Caco-2 (cell line): ENCODE measurements at regions of chr15 and their contacts with region 1.

Region 1: GRCh38 chr15:68875377-68876116 is 54.8 kb upstream of the SPESP1 start:
- DNase-seq: peak; percentile 88 to 90
- H3K4me3 ChIP-seq: peak overlapping the region; percentile 41
- H3K4me3 Mint-ChIP-seq: peak overlapping the region; percentile 76
- H3K27ac Mint-ChIP-seq: no peak overlapping the region
- H3K4me1 ChIP-seq: no peaks in the 10 kb centered on the region
- H3K4me1 Mint-ChIP-seq: no peaks in the 10 kb centered on the region
- H3K27me3 ChIP-seq: no peaks in the 10 kb centered on the region
- H3K27me3 Mint-ChIP-seq: peaks cover 5% of the 10 kb centered on the region
- CTCF ChIP-seq: peak; percentile 86

Region 2: DNA sequence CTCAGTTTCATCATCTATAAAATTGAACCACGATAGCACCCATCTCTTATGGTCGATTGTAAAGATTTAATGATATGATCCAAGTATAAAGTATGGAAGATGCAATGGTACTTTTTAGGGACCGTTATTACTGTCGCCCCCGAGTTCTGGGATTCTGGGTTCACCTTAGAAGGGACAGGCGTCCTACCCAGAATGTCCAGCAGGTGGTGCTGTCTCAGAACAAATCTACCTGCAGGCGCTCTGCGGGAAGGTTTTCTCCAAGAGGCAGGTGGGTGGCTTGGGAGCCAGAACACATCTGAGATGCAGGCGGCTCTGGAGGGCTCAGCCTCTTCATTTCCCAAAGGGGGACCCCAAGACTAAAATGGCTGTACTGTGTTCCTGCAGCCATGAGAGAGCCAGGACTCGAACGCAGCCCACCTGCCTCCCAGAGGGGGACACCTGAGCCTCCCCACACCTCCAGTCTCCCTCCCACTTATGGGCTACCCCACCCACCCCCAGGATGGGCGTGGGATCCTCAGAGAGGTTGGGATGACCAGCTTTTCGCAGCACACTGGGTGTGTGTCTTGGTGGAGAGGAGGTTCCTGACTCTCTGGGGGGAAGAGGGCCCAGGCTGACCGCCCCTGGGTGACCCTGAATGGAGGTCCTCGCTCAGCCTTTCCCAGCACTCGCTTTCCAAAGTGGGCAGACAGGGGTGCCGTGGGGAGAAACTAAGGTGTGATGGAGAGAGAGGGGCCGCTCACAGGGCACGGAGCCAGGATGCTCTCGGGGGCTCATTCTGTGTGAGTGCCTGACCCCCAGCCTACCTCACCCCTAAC is 324.9 kb before region 1 on chr15:
- CTCF ChIA-PET with region 1: interaction called, 3 read pairs
- POLR2A ChIA-PET with region 1: no interaction called
- intact Hi-C with region 1: loop called (anchors 2 kb)
- DNase-seq: peak; percentile 70 to 80
- H3K4me3 ChIP-seq: no peak overlapping the region
- H3K4me3 Mint-ChIP-seq: no peak overlapping the region
- H3K27ac Mint-ChIP-seq: no peak overlapping the region
- H3K4me1 ChIP-seq: no peaks in the 10 kb centered on the region
- H3K4me1 Mint-ChIP-seq: no peaks in the 10 kb centered on the region
- H3K27me3 ChIP-seq: no peaks in the 10 kb centered on the region
- H3K27me3 Mint-ChIP-seq: peaks cover 19% of the 10 kb centered on the region
- CTCF ChIP-seq: peak; percentile 84 to 89

Region 3: DNA sequence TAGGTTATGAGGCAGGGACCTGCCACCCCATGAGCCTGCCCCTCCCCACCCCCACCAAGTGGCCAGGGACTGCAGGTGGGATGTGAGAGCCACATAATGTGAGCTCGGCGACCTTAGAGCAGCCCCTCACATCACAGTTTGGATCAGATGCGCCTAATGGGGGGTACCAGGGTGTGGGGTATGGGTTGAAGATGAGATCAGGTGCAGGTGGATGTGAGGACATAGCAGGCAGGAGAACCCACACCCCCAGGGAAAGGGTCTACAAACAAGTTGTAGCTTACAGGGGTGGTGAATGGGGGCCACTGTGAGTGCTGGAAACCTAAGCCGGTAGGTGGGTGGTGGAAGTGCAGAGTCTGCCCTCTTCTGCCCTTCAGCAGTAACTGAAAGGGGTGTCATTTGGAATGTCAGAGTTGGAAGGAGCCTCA is 202.8 kb before region 1 on chr15:
- CTCF ChIA-PET with region 1: interaction called, 17 read pairs
- POLR2A ChIA-PET with region 1: no interaction called
- intact Hi-C with region 1: loop called (anchors 1 kb)
- DNase-seq: peak in 1 of 2 experiments; percentile 16
- H3K4me3 ChIP-seq: no peak overlapping the region
- H3K4me3 Mint-ChIP-seq: no peak overlapping the region
- H3K27ac Mint-ChIP-seq: no peak overlapping the region
- H3K4me1 ChIP-seq: no peaks in the 10 kb centered on the region
- H3K4me1 Mint-ChIP-seq: no peaks in the 10 kb centered on the region
- H3K27me3 ChIP-seq: no peaks in the 10 kb centered on the region; the same call in 1 of the 2 replicates
- H3K27me3 Mint-ChIP-seq: peaks cover 3% of the 10 kb centered on the region
- CTCF ChIP-seq: peak in 1 of 2 experiments; percentile 43

Region 4: DNA sequence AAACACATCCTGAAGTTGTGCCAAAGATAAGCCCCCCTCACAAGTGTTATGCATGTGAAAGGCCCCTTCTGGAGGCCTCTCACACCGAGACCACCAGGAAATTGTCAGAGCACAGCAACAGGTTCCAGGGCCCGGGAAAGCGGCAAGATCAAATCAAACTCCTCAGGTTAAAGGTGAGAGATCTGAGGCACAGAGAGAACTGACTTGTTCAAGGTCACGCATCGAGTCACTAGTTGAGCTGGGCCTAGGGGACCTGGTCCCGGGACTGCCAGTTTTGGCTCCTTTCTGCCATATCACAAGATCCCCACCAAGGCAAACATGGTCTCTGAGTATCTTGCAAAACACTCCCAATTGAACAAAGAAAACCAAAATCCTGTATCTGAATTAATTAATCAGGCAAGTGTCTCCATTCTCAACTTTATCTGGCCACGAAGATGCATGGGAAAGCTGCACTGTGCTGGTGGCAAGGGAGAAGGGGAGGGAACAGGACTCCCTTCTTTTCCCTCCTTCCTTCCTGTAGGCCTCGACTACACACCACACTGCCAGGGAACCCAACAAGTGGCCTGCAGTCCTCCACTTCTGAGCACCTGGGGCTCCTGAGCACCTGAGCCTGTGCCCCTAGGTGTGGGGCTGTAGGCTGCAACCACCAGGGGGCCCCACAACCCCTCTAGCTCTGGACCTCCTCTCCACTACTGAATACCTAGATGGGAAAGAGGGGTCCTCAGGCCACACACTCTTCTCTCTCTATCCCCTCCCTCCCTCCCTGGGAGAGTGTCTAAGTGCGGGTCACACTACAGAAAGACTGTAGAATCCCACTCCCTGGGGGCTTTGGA is 92.1 kb before region 1 on chr15:
- CTCF ChIA-PET with region 1: interaction called, 24 read pairs
- POLR2A ChIA-PET with region 1: interaction called, 6 read pairs
- intact Hi-C with region 1: loop called (anchors 1 kb)
- DNase-seq: peak; percentile 48 to 70
- H3K4me3 ChIP-seq: no peak overlapping the region
- H3K4me3 Mint-ChIP-seq: no peak overlapping the region
- H3K27ac Mint-ChIP-seq: no peak overlapping the region
- H3K4me1 ChIP-seq: peaks cover 17% of the 10 kb centered on the region
- H3K4me1 Mint-ChIP-seq: peaks cover 11% of the 10 kb centered on the region
- H3K27me3 ChIP-seq: no peaks in the 10 kb centered on the region
- H3K27me3 Mint-ChIP-seq: no peaks in the 10 kb centered on the region
- CTCF ChIP-seq: peak; percentile 64 to 81

Region 5: GRCh38 chr15:68829068-68829467 is 46.5 kb before region 1 on chr15:
- CTCF ChIA-PET with region 1: interaction called, 11 read pairs
- POLR2A ChIA-PET with region 1: no interaction called
- intact Hi-C with region 1: no loop called
- DNase-seq: peak in 1 of 2 experiments; percentile 10
- H3K4me3 ChIP-seq: no peak overlapping the region
- H3K4me3 Mint-ChIP-seq: no peak overlapping the region
- H3K27ac Mint-ChIP-seq: no peak overlapping the region
- H3K4me1 ChIP-seq: no peaks in the 10 kb centered on the region
- H3K4me1 Mint-ChIP-seq: no peaks in the 10 kb centered on the region
- H3K27me3 ChIP-seq: no peaks in the 10 kb centered on the region; the same call in 1 of the 2 replicates
- H3K27me3 Mint-ChIP-seq: peaks cover 7% of the 10 kb centered on the region
- CTCF ChIP-seq: peak in 1 of 2 experiments; percentile 43